RWPE1 (cell line): ENCODE measurements at regions of chr2 and their contacts with region 1.

Region 1: DNA sequence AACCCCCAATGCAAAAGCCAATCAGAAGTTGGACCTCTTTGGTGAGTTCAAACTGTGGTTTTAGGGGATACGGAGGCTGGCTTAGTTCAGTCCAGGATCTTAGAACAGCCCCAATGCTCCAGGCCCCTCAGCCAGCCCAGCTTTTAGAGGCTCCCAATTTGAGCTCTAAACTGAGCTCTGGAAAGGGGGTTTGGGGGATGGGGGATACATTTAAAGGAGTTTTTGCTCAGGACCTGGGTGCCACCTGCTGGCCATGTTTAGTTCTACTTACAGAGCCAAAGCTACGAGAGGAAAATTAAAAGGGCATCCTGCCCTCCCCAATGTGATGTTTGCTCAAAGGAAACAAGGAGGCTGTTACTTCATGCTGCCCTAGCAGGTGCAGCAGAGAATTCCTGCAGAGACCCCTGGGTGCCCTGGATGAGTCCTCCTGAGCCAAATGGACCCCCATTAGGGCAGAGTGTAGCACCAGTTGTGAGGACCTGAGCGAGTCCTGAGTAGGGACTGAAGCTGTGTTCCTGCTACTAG is 15.9 kb upstream of the TMEM214 start:
- DNase-seq: peak; percentile 67
- H3K27ac ChIP-seq: no peak overlapping the region
- CTCF ChIP-seq: peak; percentile 58

Region 2: DNA sequence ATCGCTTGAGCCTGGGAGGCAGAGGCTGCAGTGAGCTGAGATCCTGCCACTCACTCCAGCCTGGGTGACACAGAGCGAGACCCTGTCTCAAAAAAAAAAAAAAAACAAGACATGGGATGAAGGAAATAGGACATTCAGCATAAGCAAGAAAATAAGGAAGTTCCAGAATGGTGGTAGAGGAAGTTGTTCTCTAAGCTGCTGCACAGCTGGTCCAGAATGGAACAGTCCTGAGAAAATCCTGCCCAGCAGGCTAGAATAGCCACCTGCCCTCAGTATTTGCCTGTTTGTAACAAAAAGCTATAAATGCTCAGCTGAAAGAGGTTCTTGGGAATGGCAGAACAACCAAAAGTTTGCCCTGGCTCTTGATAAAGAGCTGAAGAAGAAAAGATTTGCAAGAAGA is 57.5 kb before region 1 on chr2:
- CTCF ChIA-PET with region 1: interaction called, 115 read pairs
- POLR2A ChIA-PET with region 1: no interaction called
- DNase-seq: no peak
- H3K27ac ChIP-seq: no peak overlapping the region
- CTCF ChIP-seq: no peak

Region 3: GRCh38 chr2:26970244-26970920 is 46.5 kb before region 1 on chr2 and contains the start of gene MAPRE3:
- CTCF ChIA-PET with region 1: interaction called, 11 read pairs
- POLR2A ChIA-PET with region 1: no interaction called
- DNase-seq: peak; percentile 89
- H3K27ac ChIP-seq: peak within 1 kb of the TSS; percentile 65
- CTCF ChIP-seq: no peak

Region 4: GRCh38 chr2:27233341-27233740 is 216.5 kb after region 1 on chr2:
- CTCF ChIA-PET with region 1: no interaction called
- POLR2A ChIA-PET with region 1: no interaction called
- DNase-seq: no peak
- H3K27ac ChIP-seq: no peak overlapping the region
- CTCF ChIP-seq: no peak